A549 (cell line): ENCODE measurements at regions of chr12 and their contacts with region 1.

Region 1: DNA sequence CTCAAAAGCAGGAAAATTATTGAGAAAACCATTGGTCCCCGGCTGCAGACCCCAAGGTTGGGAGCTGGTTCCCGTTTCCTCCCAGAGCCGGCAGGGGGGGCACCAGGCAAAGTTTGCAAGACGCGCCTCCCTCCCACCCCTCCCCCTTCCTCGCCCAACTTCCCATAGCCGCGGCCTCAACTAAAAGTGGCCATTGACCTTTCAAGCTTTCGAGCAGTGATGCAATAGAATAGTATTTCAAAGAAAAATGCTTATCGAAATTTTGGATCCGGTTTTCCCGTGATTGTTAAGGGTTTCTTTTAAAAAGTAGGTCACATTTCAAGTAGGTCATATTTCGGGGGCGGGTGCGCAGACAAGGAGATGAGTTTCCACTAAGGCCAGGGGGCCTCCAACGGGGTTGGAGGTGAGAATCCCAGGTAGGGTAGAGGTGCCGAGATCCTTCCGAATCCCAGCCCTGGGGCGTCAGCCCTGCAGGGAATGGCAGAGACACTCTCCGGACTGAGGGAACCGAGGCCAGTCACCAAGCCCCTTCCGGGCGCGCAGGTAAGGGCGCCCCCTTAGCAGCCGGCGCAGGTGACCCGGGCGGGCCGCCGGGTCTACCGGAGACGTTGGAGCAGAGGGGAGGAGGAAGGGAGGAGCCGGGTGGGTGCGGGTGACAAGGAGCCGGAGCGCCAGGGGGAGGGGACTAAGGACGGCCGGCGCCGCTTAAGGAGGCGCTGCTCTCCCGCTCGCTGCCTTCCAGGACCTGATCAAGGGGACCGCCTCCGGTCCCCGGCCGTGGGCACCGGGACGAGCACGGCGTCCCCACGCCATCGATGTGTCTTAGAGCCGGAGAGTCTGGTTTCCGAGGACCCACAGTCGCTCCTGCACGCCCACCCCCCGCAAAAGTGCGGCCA is 2.6 kb upstream of the SOCS2 start:
- DNase-seq: peak; percentile 91 to 96
- ATAC-seq: peak; percentile 77 to 83
- H3K4me3 ChIP-seq: peak overlapping the region; percentile 64
- H3K27ac ChIP-seq: peak overlapping the region; percentile 94
- H3K4me1 ChIP-seq: peaks cover 15% of the 10 kb centered on the region
- CTCF ChIP-seq: peak; percentile 82
- EP300 ChIP-seq: no peak
- POLR2A ChIP-seq: no peak
- RAD21 ChIP-seq: peak; percentile 87 to 96

Region 2: DNA sequence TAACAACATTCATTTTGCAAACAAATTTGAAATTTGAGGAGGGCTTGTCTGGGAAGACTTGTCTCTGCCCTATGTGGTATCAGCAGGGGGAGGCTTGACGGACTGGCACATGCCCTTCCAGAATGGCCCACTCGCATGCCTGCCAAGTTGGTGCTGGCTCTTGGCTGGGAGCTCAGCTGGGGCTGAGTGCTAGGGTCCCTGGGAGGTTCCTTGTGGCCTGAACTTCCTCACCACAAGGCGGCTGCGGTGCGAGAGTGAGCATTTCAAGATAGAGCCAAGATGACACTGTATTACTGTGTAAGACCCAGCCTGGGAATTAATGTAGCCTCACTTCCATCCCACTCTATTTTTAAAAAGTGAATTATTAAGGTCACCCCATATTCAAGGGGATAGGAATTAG is 1138.8 kb before region 1 on chr12:
- CTCF ChIA-PET with region 1: no interaction called
- POLR2A ChIA-PET with region 1: no interaction called
- DNase-seq: no peak
- ATAC-seq: peak in 1 of 2 experiments; percentile 27; a peak in 1 of 6 replicates
- H3K4me3 ChIP-seq: no peak overlapping the region
- H3K27ac ChIP-seq: no peak overlapping the region
- H3K4me1 ChIP-seq: no peaks in the 10 kb centered on the region
- CTCF ChIP-seq: no peak
- EP300 ChIP-seq: no peak
- POLR2A ChIP-seq: no peak
- RAD21 ChIP-seq: no peak

Region 3: DNA sequence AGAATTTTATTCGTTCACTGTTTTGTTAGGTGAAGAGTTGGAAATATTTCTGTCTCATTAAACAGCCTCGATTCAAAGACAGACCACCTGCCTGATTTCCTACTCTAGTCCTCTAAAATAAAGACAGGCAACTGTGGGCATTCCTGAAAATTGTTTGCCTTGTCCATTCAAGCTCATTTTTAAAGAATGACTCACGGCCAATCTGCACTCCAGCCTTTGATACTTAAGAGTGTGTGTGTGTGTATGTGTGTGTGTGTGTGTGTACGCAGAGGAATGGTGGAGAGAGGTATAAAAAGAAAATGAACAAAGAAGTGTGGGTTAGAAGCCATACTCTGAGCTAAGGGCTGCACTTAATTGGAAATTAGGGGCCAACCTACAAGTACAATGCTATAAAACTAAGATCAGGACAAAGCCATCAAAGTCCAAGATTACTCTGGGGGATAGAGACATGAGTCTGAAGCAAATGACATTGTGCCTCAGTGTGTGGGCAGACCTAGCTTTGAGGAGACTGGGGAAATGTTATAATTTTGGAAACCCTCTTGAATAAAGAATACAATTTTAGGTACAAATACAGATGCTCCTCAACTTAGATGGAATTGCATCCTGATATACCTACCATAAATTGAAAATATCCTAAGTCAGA is 43.0 kb before region 1 on chr12:
- CTCF ChIA-PET with region 1: interaction called, 12 read pairs
- POLR2A ChIA-PET with region 1: no interaction called
- DNase-seq: peak; percentile 28 to 92
- ATAC-seq: peak; percentile 68 to 78; a peak in 5 of 6 replicates
- H3K4me3 ChIP-seq: no peak overlapping the region
- H3K27ac ChIP-seq: peak overlapping the region; percentile 56 to 74
- H3K4me1 ChIP-seq: peaks cover 40% of the 10 kb centered on the region
- CTCF ChIP-seq: no peak
- EP300 ChIP-seq: peak in 1 of 2 experiments; percentile 34; a peak in 1 of 5 replicates
- POLR2A ChIP-seq: no peak
- RAD21 ChIP-seq: 0 out of 5 replicates have a peak, but pooled peaks of 1 of the 2 experiments have one; percentile 7

Region 4: DNA sequence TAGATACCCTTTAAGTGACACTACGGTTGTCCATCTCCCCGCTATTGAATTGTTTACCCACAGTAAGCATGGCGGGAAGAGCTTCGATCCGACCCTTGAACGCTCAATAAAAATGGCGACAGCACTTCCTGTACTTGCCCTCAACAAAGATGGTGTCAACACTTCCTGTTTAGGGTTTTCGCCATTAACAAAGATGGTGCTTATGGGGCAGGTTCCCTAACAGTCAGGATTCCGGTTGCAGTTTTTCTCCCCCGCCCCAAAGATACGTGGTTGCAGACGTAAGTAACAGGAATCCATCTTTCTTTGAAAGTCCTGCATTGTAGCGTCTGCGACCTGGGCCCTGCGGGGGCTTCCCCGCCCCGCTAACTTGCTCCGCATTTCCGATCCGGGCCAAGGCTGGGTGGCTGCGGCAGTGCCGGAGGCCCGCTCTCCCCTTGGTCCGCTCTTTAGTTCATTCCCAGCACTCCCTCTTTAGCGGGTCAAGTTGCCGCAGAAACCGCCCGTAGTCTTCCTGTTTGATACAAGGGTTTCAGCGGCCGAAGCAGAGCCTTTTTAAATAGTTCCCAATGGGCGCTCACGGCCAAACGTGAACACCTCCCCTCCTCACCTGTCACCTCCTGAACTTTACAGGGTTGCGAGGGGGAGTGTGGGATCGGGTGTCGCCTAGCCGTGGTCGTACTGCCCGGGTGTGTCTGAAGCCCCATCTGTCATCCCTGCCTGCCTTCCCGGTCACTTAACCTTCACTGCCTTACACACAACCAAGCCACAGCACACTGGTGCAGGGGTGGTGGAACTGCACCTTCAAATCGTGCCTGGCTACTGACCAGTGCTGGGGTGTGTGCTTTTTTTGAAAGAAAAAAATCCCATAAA is 107.5 kb after region 1 on chr12 and contains the start of gene CRADD:
- CTCF ChIA-PET with region 1: interaction called, 5 read pairs
- POLR2A ChIA-PET with region 1: interaction called, 12 read pairs
- DNase-seq: peak; percentile 76 to 99
- ATAC-seq: peak; percentile 90 to 96
- H3K4me3 ChIP-seq: peak within 1 kb of the TSS; percentile 79
- H3K27ac ChIP-seq: peak within 1 kb of the TSS; percentile 92 to 93
- H3K4me1 ChIP-seq: peaks cover 7% of the 10 kb centered on the region; the same call in 2 of the 3 replicates
- CTCF ChIP-seq: no peak
- EP300 ChIP-seq: no peak
- POLR2A ChIP-seq: peak; percentile 59
- RAD21 ChIP-seq: no peak; a peak in 2 of 5 replicates
- polyA plus RNA-seq, gene CRADD: 21.8 and 23.0 TPM in 2 replicates

Region 5: GRCh38 chr12:93766796-93767523 is 197.1 kb after region 1 on chr12:
- CTCF ChIA-PET with region 1: interaction called, 18 read pairs
- POLR2A ChIA-PET with region 1: interaction called, 4 read pairs
- DNase-seq: peak; percentile 53 to 66
- ATAC-seq: peak; percentile 83 to 93
- H3K4me3 ChIP-seq: no peak overlapping the region
- H3K27ac ChIP-seq: peak overlapping the region; percentile 29 to 58; a peak in 4 of 6 replicates
- H3K4me1 ChIP-seq: peaks cover 15% of the 10 kb centered on the region
- CTCF ChIP-seq: peak; percentile 82
- EP300 ChIP-seq: no peak
- POLR2A ChIP-seq: no peak
- RAD21 ChIP-seq: peak; percentile 89 to 95